ENCODE measurements at regions of chr3 and their contacts with region 1.

Region 1: DNA sequence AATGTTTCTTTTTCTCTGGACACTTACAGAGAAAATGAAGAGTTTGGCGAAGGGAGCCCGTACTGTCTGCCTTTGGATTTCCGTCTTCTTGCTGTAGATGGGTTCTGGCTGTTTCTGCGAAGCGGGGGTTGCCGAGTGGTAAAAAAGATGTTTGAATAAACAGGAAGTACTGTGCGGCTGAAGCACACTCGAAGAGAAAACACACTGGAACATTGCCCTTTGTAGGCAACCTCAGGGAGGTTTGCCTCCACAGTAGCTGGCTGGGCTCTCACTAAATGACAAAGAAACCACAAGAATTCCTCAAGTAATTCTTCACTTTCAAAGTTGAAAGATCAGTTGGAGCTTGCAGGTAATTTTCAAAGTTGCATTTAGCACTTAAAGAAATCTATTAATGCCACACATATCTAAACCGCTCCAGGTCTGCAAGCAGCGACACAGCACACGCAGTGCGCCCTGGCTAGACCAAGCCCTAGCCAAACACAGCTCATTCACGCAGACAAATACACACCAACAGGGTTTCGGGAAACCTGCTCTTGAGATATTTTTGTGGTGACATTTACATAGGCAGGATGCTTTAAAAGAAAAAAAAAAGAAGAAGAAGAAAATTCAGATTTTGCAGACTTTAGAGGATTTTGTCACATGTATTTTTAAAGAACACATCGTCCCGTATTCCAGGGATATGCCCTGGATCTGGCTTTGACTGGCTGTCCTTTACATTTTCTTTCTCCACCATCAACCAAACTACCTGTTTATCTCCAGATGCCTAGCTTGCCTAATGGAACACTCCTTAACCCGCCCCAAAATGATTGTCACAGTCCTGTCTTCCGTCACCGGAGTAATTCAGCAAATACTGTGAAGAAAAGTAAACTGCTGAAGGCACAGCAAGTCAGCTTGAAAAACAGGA is 452.8 kb downstream of the FOXP1 start:
- DNase-seq: peak; percentile 82
- H3K4me3 Mint-ChIP-seq: peak overlapping the region; percentile 88
- H3K27ac Mint-ChIP-seq: peak overlapping the region; percentile 96
- H3K4me1 Mint-ChIP-seq: peaks cover 66% of the 10 kb centered on the region
- H3K27me3 Mint-ChIP-seq: no peaks in the 10 kb centered on the region

Region 2: GRCh38 chr3:71109241-71109976 is 21.3 kb before region 1 on chr3:
- CTCF ChIA-PET with region 1: interaction called, 7 read pairs
- intact Hi-C with region 1: loop called (anchors 1 kb)
- DNase-seq: no peak
- H3K4me3 Mint-ChIP-seq: peak overlapping the region; percentile 41
- H3K27ac Mint-ChIP-seq: peak overlapping the region; percentile 79
- H3K4me1 Mint-ChIP-seq: peaks cover 87% of the 10 kb centered on the region
- H3K27me3 Mint-ChIP-seq: no peaks in the 10 kb centered on the region

Region 3: DNA sequence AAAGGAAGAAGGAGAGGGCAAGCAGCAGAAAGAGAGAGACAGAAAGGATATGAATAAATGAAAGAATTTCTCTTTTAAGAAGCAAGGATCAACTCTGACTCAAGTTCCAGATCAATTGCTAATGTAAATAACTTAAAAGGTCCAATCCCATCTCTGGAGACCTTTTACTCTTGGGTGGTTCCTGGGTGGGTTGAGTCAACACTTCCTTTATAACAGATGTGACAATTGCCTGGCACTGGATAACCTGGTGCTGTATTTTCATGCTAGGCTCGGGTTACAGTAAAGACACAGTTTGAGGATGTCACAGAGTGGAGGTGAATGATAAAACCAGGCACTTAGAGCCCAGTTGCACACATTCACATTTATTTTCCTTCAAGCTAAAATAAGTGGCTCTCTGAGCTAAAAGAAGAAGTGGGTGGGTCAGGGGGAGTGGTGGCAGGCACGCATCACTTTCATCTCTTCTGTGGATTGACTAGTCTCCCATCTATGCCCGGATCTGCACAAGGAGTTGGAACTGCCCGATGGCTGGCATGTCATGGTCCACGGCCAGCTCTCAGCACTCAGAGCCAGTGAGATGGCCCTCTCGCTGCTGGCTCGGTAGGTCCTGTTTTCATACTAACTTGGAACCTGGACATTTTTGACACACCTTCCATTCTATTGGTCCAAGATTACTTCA is 13.0 kb before region 1 on chr3:
- CTCF ChIA-PET with region 1: interaction called, 5 read pairs
- intact Hi-C with region 1: loop called (anchors 1 kb)
- DNase-seq: peak; percentile 58
- H3K4me3 Mint-ChIP-seq: peak overlapping the region; percentile 25
- H3K27ac Mint-ChIP-seq: peak overlapping the region; percentile 89
- H3K4me1 Mint-ChIP-seq: peaks cover 88% of the 10 kb centered on the region
- H3K27me3 Mint-ChIP-seq: no peaks in the 10 kb centered on the region

Region 4: DNA sequence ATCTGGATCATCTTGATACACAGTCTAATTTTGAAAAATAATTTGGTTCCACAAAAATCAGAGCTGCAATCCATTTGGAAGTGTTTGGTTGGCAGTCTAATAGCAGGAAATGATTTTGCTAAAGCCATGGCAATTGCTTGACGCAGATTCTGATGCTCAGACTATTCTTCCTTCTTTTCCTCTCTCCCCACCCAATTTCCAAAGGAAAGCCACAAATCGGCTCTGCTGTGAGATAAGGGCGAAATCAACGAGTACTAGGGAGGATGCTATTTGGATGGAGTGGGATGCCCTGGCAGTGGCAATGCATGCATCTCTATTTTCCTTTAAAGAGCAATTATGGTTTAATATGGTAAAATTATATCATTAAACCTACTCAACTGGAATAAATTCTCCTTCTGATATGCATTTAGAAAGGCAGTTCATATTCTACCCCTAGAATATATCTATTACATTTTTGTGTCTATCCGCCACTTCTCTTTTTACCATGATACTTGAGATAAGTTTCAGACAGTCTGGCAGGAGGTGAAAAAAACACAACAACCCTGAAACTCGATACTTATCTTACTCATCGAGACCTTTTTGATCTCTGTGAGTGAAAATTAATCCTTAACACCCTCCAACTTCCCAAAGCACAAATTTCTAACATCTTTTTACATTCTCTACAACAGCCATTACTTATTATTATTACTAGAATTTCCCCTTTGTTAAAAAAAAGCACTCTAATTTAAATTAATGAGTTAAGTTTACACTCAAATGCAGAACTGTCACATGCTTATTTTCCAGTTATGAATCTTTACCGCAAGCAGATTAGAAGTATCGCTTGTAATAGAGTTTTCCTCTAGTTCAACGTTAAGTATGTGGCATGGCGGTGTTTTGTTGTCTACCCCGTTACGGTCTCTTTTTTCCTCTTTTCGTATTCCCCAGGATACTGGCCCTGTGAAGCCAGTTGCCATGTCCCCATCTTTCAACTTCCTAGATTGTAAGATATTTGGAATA is 19.5 kb after region 1 on chr3:
- CTCF ChIA-PET with region 1: interaction called, 3 read pairs
- intact Hi-C with region 1: loop called (anchors 1 kb)
- DNase-seq: no peak
- H3K4me3 Mint-ChIP-seq: peak overlapping the region; percentile 56
- H3K27ac Mint-ChIP-seq: peak overlapping the region; percentile 68
- H3K4me1 Mint-ChIP-seq: peaks cover 64% of the 10 kb centered on the region
- H3K27me3 Mint-ChIP-seq: no peaks in the 10 kb centered on the region

Region 5: DNA sequence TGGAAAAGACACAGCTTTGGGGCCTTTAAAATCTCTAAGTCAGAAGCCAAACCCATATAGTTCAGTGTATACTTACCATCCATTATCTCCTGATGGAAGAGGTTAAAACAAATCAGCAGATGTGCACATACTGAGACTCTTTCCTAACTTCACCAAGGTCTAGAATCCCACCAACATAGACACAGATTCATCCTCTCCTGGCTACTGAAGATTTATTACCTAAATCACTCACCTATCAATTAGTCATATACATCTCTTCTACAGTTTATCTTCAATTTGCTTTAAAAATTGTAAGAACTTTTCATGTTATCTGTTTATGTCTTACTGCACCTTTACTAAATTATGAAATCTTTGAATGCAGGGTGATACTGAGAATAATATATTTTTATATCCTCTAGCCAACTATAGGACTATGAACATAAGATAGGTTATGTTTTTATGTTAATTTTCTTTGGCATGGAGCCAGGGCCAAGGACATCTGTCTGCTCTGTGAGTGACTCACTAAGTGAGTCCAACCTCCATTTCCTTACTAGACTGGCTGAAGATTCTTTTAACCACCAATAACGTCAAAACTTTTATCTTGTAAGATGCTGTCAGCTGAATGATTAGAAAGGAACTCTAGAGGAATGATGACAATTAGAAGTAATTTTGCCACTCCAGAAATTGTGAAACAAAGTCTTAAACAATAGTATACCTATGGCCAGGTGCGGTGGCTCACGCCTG is 55.2 kb after region 1 on chr3:
- CTCF ChIA-PET with region 1: interaction called, 4 read pairs
- intact Hi-C with region 1: loop called (anchors 1 kb)
- DNase-seq: peak; percentile 50
- H3K4me3 Mint-ChIP-seq: no peak overlapping the region
- H3K27ac Mint-ChIP-seq: peak overlapping the region; percentile 37
- H3K4me1 Mint-ChIP-seq: peaks cover 67% of the 10 kb centered on the region
- H3K27me3 Mint-ChIP-seq: no peaks in the 10 kb centered on the region

Region 6: DNA sequence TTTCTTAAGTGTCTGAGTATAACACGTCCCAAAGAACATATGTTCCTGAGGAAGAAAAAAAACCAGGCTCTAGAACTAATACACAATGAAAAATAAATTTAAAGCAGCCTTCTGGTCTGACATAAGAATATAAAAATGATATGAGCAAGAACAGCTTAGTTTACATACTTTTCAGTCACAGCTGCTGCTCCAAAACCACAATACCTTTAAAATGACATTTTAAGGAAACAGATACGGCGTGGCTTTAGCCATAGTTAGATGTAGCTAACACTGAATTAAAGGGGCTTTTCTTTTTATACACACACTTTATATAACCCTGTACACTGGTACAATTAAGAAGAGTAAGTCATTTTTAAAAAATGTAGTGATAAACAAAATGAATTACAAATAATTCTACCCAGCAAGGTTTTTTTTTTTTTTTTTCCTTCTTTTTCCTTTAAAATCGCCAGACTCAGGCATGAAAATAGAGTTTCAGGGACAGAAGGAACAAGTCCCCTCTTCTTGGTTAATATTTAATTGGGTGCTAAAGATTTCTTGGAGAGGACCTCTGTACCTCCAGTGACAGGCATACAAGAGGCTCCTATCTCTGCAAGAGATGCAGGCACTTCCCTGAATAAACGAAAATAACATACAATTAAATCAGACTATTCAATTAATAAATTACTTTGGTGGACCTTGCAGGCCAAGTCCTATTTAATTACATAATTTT is 187.2 kb after region 1 on chr3:
- CTCF ChIA-PET with region 1: no interaction called
- intact Hi-C with region 1: no loop called
- DNase-seq: no peak
- H3K4me3 Mint-ChIP-seq: no peak overlapping the region
- H3K27ac Mint-ChIP-seq: no peak overlapping the region
- H3K4me1 Mint-ChIP-seq: peaks cover 46% of the 10 kb centered on the region
- H3K27me3 Mint-ChIP-seq: no peaks in the 10 kb centered on the region

Region 7: DNA sequence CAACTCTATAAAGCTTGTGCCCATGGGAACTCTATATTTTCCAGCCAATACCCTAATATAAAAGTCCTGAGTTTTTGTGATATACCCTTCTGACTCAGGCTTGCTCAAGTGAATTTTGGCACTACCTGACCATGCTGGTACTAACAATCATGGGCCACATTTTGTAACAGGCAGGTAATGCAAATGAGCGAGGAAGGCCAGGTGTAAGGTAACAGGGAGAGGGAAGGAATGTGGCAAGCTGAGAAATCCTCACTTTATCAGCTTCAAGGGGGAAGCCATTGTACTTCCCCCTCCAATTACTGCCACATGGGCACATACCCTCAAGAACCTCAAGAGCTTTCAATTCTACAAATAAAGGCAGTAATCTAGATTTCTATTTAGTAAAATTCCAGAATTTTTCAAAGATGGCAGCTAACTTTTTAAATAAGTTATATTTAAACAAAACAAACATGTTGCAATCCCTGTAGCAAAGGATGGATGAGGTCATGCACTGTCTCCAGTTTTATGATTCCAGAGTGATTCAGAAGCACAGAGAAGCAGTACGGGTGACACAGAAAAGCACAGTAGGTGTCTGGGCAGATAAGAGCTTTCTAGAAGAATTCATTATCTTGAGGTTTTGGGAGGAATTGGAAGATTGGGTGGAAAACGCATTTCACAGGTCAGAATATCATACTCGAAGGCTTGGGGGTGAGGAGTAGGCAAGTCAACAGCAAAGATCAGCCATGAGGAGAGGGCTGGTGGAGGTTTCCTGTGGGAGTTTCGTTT is 365.2 kb after region 1 on chr3:
- CTCF ChIA-PET with region 1: no interaction called
- intact Hi-C with region 1: loop called (anchors 5 kb)
- DNase-seq: peak; percentile 43
- H3K4me3 Mint-ChIP-seq: peak overlapping the region; percentile 49
- H3K27ac Mint-ChIP-seq: peak overlapping the region; percentile 73
- H3K4me1 Mint-ChIP-seq: peaks cover 83% of the 10 kb centered on the region
- H3K27me3 Mint-ChIP-seq: no peaks in the 10 kb centered on the region

Measured in activated naive CD4-positive, alpha-beta T cell treated with anti-CD3 and anti-CD28 coated beads for 36 hours (primary cell).